MCF 10A (cell line): ENCODE measurements at regions of chr10 and their contacts with region 1.

Region 1: DNA sequence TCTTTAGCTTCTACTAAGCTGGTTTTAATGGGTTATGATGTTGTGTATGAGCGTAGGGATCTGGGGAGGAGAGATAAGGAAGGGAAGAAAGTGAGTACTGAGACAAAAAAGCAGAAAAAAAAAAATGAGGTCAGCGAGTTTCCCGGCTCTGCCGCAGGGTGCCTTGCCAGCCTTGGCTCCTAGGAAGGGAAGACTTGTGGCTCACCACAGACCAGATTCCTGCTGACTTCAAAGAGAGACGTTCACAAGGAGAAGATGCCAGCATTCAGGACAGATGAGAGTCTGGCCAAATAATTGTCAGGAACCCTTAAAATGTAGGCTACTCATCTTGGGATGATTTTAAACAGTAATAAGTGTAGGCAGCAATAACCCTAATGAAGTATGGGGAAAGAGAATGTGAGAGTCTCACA is 11.4 kb upstream of the FAS start:
- DNase-seq: peak; percentile 67
- H3K4me3 Mint-ChIP-seq: no peak overlapping the region
- H3K27ac Mint-ChIP-seq: peak overlapping the region; percentile 68
- H3K4me1 Mint-ChIP-seq: peaks cover 14% of the 10 kb centered on the region
- H3K27me3 Mint-ChIP-seq: no peaks in the 10 kb centered on the region
- CTCF ChIP-seq: no peak

Region 2: GRCh38 chr10:88949912-88950837 is 29.0 kb before region 1 on chr10:
- CTCF ChIA-PET with region 1: interaction called, 3 read pairs
- POLR2A ChIA-PET with region 1: interaction called, 10 read pairs
- intact Hi-C with region 1: no loop called
- DNase-seq: no peak
- H3K4me3 Mint-ChIP-seq: no peak overlapping the region
- H3K27ac Mint-ChIP-seq: no peak overlapping the region
- H3K4me1 Mint-ChIP-seq: peaks cover 20% of the 10 kb centered on the region
- H3K27me3 Mint-ChIP-seq: no peaks in the 10 kb centered on the region
- CTCF ChIP-seq: no peak

Region 3: GRCh38 chr10:89019569-89020327 is 40.6 kb after region 1 on chr10:
- CTCF ChIA-PET with region 1: no interaction called
- POLR2A ChIA-PET with region 1: no interaction called
- intact Hi-C with region 1: no loop called
- DNase-seq: no peak
- H3K4me3 Mint-ChIP-seq: no peak overlapping the region
- H3K27ac Mint-ChIP-seq: no peak overlapping the region
- H3K4me1 Mint-ChIP-seq: peaks cover 24% of the 10 kb centered on the region
- H3K27me3 Mint-ChIP-seq: no peaks in the 10 kb centered on the region
- CTCF ChIP-seq: no peak

Region 4: DNA sequence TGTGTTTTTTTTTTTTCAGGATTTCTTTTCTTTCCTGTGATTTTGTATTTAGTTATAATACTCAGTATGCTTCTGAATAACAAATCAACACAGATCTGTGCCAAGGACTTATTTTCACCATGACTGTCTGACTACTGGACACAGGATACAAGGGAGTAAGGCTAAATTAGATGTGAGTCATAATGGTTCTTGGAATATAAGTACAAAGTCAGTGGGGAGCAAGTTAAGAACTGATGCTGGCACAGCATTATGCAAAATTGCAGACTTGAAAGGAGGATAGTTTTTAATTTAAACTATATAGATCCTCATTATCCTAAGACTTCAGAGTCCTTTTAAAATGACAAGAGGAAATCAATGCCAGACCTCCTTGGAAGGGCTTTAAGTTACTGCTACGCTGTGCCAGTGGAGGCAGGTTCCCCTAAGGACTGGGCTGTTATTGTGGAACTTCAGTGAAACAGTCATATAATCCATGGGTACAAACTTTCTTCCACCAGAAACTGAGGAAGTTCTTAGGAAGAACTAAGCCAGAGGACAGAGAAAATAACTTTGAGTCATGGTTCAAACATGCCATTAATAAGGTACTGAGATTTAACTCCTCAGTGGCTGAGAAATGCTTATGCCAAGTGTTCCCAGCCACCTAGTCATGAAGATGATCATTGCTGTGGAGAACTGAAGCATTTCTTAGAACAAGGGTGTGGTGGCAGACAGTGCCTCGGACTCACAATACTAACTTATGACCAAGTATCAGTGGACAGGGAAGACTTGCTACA is 1347.5 kb after region 1 on chr10:
- CTCF ChIA-PET with region 1: no interaction called
- POLR2A ChIA-PET with region 1: no interaction called
- intact Hi-C with region 1: no loop called
- DNase-seq: peak; percentile 49
- H3K4me3 Mint-ChIP-seq: no peak overlapping the region
- H3K27ac Mint-ChIP-seq: peak overlapping the region; percentile 35
- H3K4me1 Mint-ChIP-seq: peaks cover 17% of the 10 kb centered on the region
- H3K27me3 Mint-ChIP-seq: no peaks in the 10 kb centered on the region
- CTCF ChIP-seq: no peak